Activated CD8-positive, alpha-beta T cell treated with anti-CD3 and anti-CD28 coated beads, Interleukin-2, amount 10 ng/mL, durations not matched to agents 7 days and 5 days (primary cell): ENCODE measurements at regions of chr20 and their contacts with region 1.

Region 1: DNA sequence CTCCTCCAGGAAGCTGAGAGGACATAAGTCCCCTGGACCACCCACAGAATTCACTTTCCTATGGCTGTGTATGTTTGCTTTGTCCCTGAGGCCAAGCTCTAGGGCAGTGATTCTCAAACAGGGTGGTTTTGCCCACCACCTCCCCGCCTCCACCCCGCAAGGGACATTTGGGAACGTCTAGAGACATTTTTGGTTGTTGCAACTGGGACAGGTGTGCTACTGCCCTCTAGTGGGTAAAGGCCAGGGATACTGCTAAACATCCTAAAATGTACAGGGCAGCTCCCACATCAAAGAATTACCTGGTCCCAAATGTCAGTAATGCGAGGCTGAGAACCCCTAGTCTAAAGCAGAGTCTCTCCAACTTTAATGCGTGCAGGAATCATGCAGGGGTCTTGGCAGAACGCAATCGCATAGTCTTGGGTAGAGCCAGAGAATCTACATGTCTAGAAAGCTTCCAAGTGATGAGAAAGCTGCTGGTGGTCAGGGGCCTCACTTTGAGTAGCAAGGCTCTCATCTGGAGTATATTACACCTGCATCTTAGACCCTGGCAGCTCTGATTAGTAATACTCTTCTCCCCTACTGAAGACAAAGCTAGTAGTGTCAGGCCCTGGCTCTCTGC is 5.1 kb downstream of the KCNS1 start:
- DNase-seq: peak; percentile 75
- ATAC-seq: peak; percentile 52
- H3K4me3 Mint-ChIP-seq: no peak overlapping the region
- H3K27ac Mint-ChIP-seq: no peak overlapping the region
- H3K4me1 Mint-ChIP-seq: peaks cover 13% of the 10 kb centered on the region
- H3K27me3 Mint-ChIP-seq: peaks cover 34% of the 10 kb centered on the region

Region 2: DNA sequence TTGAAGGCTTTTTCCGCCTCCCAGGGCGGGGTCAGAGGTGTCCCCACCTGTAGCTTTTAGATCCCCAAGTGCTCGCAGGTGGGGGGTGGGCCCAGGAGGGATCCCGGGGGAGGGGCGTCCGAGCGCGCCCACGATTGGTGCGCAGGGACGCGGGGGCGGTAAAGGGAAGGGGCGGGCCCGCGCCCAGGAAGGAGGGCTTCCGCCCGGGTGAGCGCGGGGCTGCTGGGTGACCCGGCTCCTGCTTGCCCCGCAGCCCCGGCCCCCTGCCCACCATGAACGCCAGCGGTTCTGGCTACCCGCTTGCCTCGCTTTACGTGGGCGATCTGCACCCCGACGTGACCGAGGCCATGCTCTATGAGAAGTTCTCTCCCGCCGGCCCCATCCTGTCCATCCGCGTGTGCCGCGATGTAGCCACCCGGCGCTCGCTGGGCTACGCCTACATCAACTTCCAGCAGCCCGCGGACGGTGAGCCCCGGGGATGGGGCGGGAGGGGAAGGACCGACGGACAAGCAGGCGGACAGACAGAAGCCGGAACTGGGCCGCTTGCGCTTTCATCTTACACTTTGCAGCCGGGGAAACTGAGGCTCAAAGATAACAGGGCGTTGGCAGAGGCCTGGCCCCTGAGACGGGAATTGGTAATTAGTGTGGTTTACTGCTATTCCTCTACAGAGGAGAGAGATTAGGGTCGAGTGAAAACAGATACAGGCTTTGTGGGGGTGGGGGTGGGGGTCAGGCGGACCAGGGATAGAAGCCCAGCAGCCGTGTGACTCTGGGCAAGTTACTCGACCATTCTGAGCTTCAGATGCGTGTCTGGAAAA is 185.8 kb before region 1 on chr20 and contains the start of gene PABPC1L:
- CTCF ChIA-PET with region 1: interaction called, 12 read pairs
- POLR2A ChIA-PET with region 1: no interaction called
- DNase-seq: peak; percentile 79
- ATAC-seq: peak; percentile 97
- H3K4me3 Mint-ChIP-seq: peak within 1 kb of the TSS; percentile 85
- H3K27ac Mint-ChIP-seq: peak within 1 kb of the TSS; percentile 78
- H3K4me1 Mint-ChIP-seq: peaks cover 51% of the 10 kb centered on the region
- H3K27me3 Mint-ChIP-seq: no peaks in the 10 kb centered on the region
- total RNA-seq, gene PABPC1L: 90.0 to 103 TPM

Region 3: DNA sequence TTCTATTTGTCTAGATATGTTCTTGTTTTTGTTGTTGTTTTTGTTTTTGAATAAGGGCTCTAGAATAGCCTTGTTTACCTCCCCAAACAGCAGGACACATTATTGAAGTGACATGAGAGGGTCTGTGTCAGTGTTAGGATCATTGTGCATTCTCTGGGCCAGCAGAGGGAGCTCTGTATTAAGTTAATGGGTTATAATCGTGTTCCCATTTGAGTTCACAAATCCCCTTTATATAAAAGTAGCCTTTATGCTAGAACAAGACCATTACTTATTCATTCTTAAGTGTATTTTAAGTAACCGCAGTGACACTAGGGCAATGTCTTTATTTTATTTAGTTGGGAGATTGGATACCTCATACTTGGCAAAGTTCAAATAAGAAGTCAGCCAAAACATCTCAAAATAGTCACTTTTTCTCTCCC is 84.7 kb before region 1 on chr20:
- CTCF ChIA-PET with region 1: interaction called, 64 read pairs
- POLR2A ChIA-PET with region 1: no interaction called
- DNase-seq: peak; percentile 65
- ATAC-seq: peak; percentile 71
- H3K4me3 Mint-ChIP-seq: no peak overlapping the region
- H3K27ac Mint-ChIP-seq: no peak overlapping the region
- H3K4me1 Mint-ChIP-seq: peaks cover 16% of the 10 kb centered on the region
- H3K27me3 Mint-ChIP-seq: no peaks in the 10 kb centered on the region

Region 4: GRCh38 chr20:45028424-45029136 is 67.3 kb before region 1 on chr20:
- CTCF ChIA-PET with region 1: interaction called, 11 read pairs
- POLR2A ChIA-PET with region 1: interaction called, 3 read pairs
- DNase-seq: no peak
- ATAC-seq: no peak
- H3K4me3 Mint-ChIP-seq: no peak overlapping the region
- H3K27ac Mint-ChIP-seq: no peak overlapping the region
- H3K4me1 Mint-ChIP-seq: peaks cover 30% of the 10 kb centered on the region
- H3K27me3 Mint-ChIP-seq: no peaks in the 10 kb centered on the region

Region 5: DNA sequence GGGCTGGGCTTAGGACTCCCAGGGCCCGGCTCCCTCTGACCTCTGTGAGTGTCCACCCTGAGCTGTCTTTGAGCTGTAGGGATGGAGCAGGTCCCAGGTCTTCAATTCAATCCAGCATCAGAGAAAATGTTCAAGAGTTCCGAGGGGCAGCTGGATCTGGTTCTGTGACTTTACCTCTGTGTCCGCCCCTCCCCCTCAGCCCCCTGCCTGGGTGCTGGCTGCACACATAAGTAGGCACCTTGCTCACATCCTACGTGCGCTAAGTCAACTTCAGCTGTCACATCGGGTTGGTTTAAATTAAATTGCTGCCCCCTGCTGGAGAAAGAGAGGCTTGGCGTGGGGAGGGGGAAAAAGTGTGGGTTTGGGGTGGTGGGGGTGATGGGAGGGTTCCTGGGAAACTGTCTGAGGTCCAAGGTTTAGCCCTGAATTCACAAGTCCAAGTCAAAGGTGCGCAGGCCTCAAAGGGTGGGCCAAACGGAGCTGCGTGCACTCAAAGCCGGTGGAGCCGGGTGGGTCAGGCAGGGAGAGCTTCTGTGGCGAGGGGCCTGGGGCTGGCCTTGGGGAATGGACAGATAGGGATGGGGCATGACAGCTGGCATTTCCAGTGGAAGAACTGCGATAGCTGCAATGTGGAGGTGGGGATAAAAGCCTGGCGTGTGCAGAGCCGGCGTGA is 16.1 kb after region 1 on chr20:
- CTCF ChIA-PET with region 1: interaction called, 144 read pairs
- POLR2A ChIA-PET with region 1: interaction called, 4 read pairs
- DNase-seq: no peak
- ATAC-seq: no peak
- H3K4me3 Mint-ChIP-seq: no peak overlapping the region
- H3K27ac Mint-ChIP-seq: no peak overlapping the region
- H3K4me1 Mint-ChIP-seq: peaks cover 5% of the 10 kb centered on the region
- H3K27me3 Mint-ChIP-seq: peaks cover 12% of the 10 kb centered on the region